A673 (cell line): ENCODE measurements at regions of chr6 and their contacts with region 1.

Region 1: GRCh38 chr6:153312641-153313040 is 181.6 kb upstream of the RGS17 start:
- DNase-seq: peak; percentile 86
- H3K4me3 ChIP-seq: no peak overlapping the region
- H3K27ac ChIP-seq: peak overlapping the region; percentile 22
- H3K4me1 ChIP-seq: peaks cover 52% of the 10 kb centered on the region
- H3K27me3 ChIP-seq: no peaks in the 10 kb centered on the region
- CTCF ChIP-seq: peak; percentile 78

Region 2: DNA sequence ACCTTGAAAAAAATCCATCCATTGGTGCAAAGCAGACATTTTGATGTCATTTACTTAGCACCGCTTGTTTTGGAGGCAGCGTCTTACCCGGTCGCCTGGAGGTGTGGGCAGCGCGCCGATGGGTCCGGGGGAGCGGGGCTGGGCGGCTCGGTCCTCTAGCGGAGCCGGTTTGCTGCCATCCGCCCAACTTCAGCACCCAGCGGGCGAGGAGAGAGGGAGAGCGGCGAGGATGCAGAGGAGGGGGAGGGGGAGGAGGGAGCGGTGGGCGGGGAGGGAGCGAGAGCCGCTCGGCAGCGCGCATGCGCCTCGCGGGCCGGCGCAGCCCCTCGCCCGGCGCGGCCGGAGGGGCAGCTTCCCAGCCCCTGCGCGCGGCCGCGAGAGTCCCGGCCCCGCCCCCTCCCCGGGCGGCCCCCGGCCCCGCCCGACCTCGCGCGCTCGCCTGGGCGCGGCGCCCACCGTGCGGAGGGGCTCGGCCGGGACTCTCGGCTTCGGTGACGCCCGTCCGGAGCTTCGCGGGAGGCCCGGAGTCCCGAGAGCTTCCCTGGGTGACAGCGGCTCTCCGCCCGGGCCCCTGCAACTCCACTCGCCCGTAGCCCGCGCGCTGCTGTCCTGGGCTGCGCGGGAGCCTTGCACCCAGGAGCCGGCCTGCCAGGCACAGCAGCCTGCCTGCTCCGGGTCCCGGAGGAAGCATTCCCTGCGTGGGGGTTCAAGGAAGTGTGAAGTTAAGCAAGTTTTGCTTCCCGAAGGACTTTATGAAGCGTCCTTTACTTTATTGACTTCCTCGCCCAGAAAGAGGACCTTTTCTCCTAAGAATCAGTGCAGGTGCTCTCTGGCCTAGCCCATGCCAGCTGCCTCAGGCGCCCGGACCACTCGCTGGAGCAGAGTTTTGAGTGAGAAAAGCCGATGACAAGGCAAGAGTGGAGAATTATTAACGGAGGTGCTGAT is 181.3 kb before region 1 on chr6 and contains the start of gene RGS17:
- CTCF ChIA-PET with region 1: no interaction called
- POLR2A ChIA-PET with region 1: no interaction called
- intact Hi-C with region 1: loop called (anchors 5 kb)
- DNase-seq: peak; percentile 78
- H3K4me3 ChIP-seq: peak within 1 kb of the TSS; percentile 76
- H3K27ac ChIP-seq: no peak within 1 kb of the TSS
- H3K4me1 ChIP-seq: peaks cover 10% of the 10 kb centered on the region
- H3K27me3 ChIP-seq: peaks cover 42% of the 10 kb centered on the region
- CTCF ChIP-seq: no peak
- total RNA-seq, gene RGS17: 2.4 and 3.5 TPM in 2 replicates

Region 3: DNA sequence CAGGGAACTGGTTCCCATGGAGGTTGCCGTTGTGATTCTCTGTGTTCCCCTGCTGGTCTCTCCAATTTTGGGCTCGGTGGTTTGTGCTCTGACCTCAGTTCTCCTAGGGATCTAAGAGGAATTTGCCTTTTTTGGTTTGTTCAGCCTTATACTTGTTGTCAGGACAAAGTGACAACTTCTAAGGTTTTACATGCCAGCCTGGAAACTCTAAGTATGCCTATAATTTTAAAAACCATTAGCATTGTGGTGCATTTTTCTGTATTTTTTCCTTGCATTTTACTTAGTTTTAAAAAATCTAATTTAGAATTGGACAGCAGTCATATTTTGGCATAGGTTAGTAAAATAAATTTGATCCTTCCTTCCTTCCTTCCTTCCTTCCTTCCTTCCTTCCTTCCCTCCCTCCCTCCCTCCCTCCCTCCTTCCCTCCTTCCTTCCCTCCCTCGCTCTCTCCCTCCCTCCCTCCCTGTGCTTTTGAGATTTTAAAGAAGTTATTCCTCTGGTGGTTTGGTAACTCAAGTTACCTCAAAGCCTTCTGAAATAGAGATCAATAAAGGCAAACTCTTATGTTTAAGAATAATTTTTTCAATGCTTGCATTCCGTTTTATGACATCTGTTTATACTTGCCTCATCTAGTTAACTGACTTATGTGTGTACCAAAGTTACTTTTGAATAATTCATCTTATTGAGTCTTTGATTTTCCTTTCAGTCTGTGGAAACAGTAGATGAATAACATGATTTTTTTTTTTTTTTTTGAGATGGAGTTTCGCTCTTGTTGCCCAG is 40.2 kb before region 1 on chr6:
- CTCF ChIA-PET with region 1: no interaction called
- POLR2A ChIA-PET with region 1: no interaction called
- intact Hi-C with region 1: loop called (anchors 1 kb)
- DNase-seq: peak; percentile 90
- H3K4me3 ChIP-seq: peak overlapping the region; percentile 13
- H3K27ac ChIP-seq: peak overlapping the region; percentile 98
- H3K4me1 ChIP-seq: peaks cover 24% of the 10 kb centered on the region
- H3K27me3 ChIP-seq: no peaks in the 10 kb centered on the region
- CTCF ChIP-seq: no peak

Region 4: DNA sequence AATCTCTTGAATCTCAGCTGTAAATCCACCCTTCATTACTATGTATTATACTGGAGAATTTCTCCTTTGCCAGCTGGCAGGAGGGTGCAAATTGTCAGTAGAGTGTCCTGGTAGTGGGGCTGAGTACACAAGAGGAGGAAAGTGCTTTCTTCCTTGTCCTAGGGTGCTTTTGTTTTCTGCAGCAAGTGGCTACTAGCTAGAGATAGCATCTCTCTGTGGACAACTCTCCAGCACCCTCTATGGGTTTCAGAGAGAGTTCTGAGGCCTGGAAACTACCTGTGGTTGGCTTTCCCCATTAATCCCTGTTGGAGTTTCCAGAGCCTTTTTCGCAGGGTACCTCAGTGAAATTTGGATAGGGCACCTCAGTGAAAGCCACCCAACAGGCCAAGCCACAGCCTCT is 241.0 kb after region 1 on chr6:
- CTCF ChIA-PET with region 1: no interaction called
- POLR2A ChIA-PET with region 1: no interaction called
- intact Hi-C with region 1: loop called (anchors 5 kb)
- DNase-seq: peak; percentile 76
- H3K4me3 ChIP-seq: no peak overlapping the region
- H3K27ac ChIP-seq: no peak overlapping the region
- H3K4me1 ChIP-seq: peaks cover 6% of the 10 kb centered on the region
- H3K27me3 ChIP-seq: no peaks in the 10 kb centered on the region
- CTCF ChIP-seq: peak; percentile 73

Region 5: GRCh38 chr6:153957394-153957793 is 644.8 kb after region 1 on chr6:
- CTCF ChIA-PET with region 1: no interaction called
- POLR2A ChIA-PET with region 1: no interaction called
- intact Hi-C with region 1: loop called (anchors 5 kb)
- DNase-seq: no peak
- H3K4me3 ChIP-seq: no peak overlapping the region
- H3K27ac ChIP-seq: no peak overlapping the region
- H3K4me1 ChIP-seq: no peaks in the 10 kb centered on the region
- H3K27me3 ChIP-seq: no peaks in the 10 kb centered on the region
- CTCF ChIP-seq: no peak